ENCODE measurements at regions of chr20 and their contacts with region 1.

Region 1: GRCh38 chr20:54649511-54649962 is 174.1 kb downstream of the DOK5 start:
- DNase-seq: peak; percentile 82
- H3K4me3 Mint-ChIP-seq: no peak overlapping the region
- H3K27ac Mint-ChIP-seq: no peak overlapping the region
- H3K4me1 Mint-ChIP-seq: no peaks in the 10 kb centered on the region
- H3K27me3 Mint-ChIP-seq: peaks cover 39% of the 10 kb centered on the region
- CTCF ChIP-seq: peak; percentile 71

Region 2: DNA sequence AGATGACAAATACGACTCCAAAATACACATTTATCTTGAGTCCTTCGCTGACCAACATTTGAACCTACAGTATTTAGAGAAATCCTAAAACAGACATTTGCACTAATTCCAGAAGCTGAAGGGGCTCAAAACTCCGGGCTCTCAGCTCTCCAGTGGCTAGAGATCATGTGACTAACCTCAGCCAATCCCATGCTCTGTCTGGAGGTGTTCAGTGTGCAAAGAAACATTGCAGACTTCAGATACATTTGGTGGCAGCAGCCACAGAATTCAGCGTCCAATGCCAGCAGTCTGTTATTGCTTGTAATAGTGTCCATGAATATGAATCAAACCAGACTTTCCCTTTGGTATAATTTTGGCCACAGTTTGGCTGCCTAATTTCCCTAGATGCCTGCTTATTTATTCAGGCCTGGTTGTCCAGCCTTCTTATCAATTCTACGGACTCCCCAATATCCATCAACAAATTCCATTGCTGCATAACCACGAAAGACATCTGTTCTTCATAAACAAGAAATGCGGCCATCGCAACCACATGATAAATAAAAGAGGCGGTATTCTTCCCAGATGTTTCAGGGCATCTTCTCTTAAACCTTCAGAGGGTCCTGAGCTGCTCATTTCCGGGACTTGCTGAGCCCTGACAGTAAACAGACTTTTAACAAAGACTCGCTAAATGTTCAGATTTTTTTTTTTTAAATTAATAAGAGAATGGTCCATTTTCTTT is 461.2 kb before region 1 on chr20:
- CTCF ChIA-PET with region 1: no interaction called
- POLR2A ChIA-PET with region 1: no interaction called
- intact Hi-C with region 1: no loop called
- DNase-seq: no peak
- H3K4me3 Mint-ChIP-seq: no peak overlapping the region
- H3K27ac Mint-ChIP-seq: no peak overlapping the region
- H3K4me1 Mint-ChIP-seq: peaks cover 24% of the 10 kb centered on the region
- H3K27me3 Mint-ChIP-seq: no peaks in the 10 kb centered on the region
- CTCF ChIP-seq: no peak

Region 3: GRCh38 chr20:54219751-54220426 is 429.6 kb before region 1 on chr20:
- CTCF ChIA-PET with region 1: interaction called, 339 read pairs
- POLR2A ChIA-PET with region 1: interaction called, 6 read pairs
- intact Hi-C with region 1: loop called (anchors 1 kb)
- DNase-seq: peak; percentile 65
- H3K4me3 Mint-ChIP-seq: no peak overlapping the region
- H3K27ac Mint-ChIP-seq: no peak overlapping the region
- H3K4me1 Mint-ChIP-seq: peaks cover 10% of the 10 kb centered on the region
- H3K27me3 Mint-ChIP-seq: no peaks in the 10 kb centered on the region
- CTCF ChIP-seq: peak; percentile 57

Region 4: GRCh38 chr20:54246564-54246963 is 403.0 kb before region 1 on chr20:
- CTCF ChIA-PET with region 1: interaction called, 11 read pairs
- POLR2A ChIA-PET with region 1: no interaction called
- intact Hi-C with region 1: no loop called
- DNase-seq: no peak
- H3K4me3 Mint-ChIP-seq: no peak overlapping the region
- H3K27ac Mint-ChIP-seq: no peak overlapping the region
- H3K4me1 Mint-ChIP-seq: no peaks in the 10 kb centered on the region
- H3K27me3 Mint-ChIP-seq: no peaks in the 10 kb centered on the region
- CTCF ChIP-seq: no peak

Region 5: DNA sequence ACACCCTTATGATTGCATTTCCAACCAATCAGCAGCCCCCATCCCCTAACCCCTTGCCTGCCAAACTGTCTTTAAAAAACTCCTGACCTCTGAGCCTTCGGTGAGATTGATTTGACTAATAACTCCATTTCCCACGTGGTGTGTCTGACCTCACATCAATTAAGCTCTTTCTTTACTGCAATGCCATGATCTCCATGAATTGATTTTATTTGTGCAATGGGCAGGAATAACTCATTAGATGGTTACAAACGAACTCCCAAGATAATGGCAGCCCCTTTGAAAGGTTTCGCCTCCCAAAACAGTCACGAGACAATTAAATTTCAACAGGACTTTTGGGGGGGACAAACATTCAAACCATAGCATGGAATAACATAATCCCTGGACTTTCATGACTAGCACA is 13.0 kb before region 1 on chr20:
- CTCF ChIA-PET with region 1: interaction called, 11 read pairs
- POLR2A ChIA-PET with region 1: interaction called, 3 read pairs
- intact Hi-C with region 1: no loop called
- DNase-seq: no peak
- H3K4me3 Mint-ChIP-seq: no peak overlapping the region
- H3K27ac Mint-ChIP-seq: no peak overlapping the region
- H3K4me1 Mint-ChIP-seq: no peaks in the 10 kb centered on the region
- H3K27me3 Mint-ChIP-seq: peaks cover 6% of the 10 kb centered on the region
- CTCF ChIP-seq: no peak

Region 6: GRCh38 chr20:54668271-54669039 is 18.9 kb after region 1 on chr20:
- CTCF ChIA-PET with region 1: interaction called, 21 read pairs
- POLR2A ChIA-PET with region 1: interaction called, 3 read pairs
- intact Hi-C with region 1: no loop called
- DNase-seq: peak; percentile 32
- H3K4me3 Mint-ChIP-seq: no peak overlapping the region
- H3K27ac Mint-ChIP-seq: no peak overlapping the region
- H3K4me1 Mint-ChIP-seq: no peaks in the 10 kb centered on the region
- H3K27me3 Mint-ChIP-seq: peaks cover 70% of the 10 kb centered on the region
- CTCF ChIP-seq: peak; percentile 54

Region 7: DNA sequence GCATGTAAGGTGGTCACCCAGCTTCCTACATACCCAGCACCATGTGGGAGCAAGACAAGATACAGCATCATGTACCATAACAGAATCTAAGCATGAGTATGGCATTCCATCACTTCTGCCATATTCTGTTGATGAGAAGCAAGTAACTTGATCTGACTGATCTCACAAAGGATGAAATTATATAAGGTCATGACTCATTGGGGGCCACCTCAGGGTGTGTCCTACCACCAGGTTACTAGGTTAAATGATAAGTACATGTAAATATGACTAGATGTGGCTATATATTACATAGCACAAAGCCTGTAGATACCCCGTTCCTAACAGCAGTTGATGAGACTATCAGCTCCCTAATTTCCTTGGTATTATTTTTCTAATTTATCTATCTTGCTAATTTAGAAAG is 38.9 kb after region 1 on chr20:
- CTCF ChIA-PET with region 1: no interaction called
- POLR2A ChIA-PET with region 1: no interaction called
- intact Hi-C with region 1: no loop called
- DNase-seq: no peak
- H3K4me3 Mint-ChIP-seq: no peak overlapping the region
- H3K27ac Mint-ChIP-seq: no peak overlapping the region
- H3K4me1 Mint-ChIP-seq: peaks cover 6% of the 10 kb centered on the region
- H3K27me3 Mint-ChIP-seq: peaks cover 35% of the 10 kb centered on the region
- CTCF ChIP-seq: no peak

Measured in MCF 10A (cell line).